ENCODE measurements at regions of chr7 and their contacts with region 1.

Region 1: DNA sequence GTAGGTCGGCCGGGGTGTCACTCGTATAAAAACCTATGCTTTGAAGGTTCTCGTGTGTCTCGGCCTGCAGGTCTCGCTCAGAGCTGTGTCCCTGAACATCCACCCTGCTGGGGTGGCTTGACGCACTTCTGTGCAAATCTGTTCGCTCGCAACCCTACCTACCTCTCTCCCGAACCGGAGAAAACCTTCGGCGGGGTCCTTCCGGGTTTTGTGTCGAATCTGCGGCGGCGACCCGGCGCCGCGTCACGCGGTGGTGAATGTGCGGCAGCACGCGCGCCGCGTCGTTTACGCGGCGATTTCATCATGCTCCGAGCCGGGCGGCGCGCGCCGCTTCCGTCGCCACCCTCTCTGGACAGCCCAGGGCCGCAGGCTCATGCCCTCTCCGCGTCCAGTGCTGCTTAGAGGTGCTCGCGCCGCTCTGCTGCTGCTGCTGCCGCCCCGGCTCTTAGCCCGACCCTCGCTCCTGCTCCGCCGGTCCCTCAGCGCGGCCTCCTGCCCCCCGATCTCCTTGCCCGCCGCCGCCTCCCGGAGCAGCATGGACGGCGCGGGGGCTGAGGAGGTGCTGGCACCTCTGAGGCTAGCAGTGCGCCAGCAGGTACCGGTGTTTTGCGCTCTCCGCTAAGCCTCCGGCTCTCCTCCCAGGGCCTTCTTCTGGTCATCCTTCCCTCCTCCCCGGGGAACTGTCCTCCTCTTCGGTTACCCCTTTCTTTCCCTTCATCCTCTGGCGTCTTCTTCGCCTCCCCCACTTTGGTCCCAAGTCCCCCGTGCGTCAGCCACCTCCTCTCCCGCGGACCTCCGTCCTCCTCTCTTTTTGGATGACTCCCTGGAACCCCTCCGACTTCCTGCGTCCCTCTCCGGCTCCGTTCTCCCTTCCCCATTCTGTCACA is at the start of gene GARS1:
- DNase-seq: peak; percentile 85
- H3K4me3 Mint-ChIP-seq: peak within 1 kb of the TSS; percentile 98
- H3K27ac Mint-ChIP-seq: peak within 1 kb of the TSS; percentile 98
- H3K4me1 Mint-ChIP-seq: peaks cover 44% of the 10 kb centered on the region
- H3K27me3 Mint-ChIP-seq: no peaks in the 10 kb centered on the region
- total RNA-seq, gene GARS1: 208 and 221 TPM in 2 replicates

Region 2: DNA sequence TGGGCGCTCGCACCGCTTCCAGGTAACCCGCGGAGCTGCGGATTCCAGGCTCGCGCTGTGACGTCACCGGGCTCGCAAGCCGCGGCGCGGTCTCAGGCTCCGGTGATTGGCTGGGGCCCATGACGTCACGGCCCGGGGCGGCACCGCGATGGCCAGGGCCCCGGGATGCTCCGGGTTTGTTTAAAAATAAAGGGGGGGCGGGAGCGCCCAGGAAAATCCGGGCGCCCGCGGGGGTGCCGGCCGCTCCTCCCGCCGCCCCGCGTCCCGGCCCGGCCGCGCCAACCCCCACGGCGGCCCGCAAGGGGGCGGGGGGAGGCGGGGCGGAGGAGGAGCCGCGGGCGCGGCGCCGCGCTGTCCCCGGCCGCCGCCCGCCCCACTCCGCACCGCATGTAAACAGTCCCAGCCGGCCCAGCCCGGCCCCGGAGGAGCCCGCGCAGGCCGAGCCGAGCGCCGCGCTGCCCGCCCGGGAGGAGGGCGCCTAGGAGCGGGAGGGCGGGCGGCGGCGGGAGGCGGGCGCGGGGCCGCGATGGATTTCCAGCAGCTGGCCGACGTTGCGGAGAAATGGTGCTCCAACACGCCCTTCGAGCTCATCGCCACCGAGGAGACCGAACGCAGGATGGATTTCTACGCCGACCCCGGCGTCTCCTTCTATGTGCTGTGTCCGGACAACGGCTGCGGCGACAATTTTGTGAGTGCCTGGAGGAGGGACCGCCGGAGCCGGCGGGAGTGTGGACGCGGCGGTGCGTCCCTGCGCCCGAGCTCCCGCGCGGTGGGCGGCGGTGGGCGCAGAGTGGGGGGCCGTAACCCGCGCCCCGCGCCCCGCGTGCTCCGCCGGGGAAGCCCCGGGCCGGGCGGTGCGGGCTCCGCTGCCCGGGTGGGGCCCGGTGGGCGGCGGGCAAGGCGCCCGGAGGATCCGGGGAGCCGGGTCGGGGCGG is 459.9 kb before region 1 on chr7 and contains the start of gene MTURN:
- intact Hi-C with region 1: loop called (anchors 10 kb)
- DNase-seq: peak; percentile 81
- H3K4me3 Mint-ChIP-seq: peak within 1 kb of the TSS; percentile 86
- H3K27ac Mint-ChIP-seq: peak within 1 kb of the TSS; percentile 80
- H3K4me1 Mint-ChIP-seq: peaks cover 4% of the 10 kb centered on the region
- H3K27me3 Mint-ChIP-seq: peaks cover 34% of the 10 kb centered on the region
- total RNA-seq, gene MTURN: 4.0 and 4.7 TPM in 2 replicates

Region 3: DNA sequence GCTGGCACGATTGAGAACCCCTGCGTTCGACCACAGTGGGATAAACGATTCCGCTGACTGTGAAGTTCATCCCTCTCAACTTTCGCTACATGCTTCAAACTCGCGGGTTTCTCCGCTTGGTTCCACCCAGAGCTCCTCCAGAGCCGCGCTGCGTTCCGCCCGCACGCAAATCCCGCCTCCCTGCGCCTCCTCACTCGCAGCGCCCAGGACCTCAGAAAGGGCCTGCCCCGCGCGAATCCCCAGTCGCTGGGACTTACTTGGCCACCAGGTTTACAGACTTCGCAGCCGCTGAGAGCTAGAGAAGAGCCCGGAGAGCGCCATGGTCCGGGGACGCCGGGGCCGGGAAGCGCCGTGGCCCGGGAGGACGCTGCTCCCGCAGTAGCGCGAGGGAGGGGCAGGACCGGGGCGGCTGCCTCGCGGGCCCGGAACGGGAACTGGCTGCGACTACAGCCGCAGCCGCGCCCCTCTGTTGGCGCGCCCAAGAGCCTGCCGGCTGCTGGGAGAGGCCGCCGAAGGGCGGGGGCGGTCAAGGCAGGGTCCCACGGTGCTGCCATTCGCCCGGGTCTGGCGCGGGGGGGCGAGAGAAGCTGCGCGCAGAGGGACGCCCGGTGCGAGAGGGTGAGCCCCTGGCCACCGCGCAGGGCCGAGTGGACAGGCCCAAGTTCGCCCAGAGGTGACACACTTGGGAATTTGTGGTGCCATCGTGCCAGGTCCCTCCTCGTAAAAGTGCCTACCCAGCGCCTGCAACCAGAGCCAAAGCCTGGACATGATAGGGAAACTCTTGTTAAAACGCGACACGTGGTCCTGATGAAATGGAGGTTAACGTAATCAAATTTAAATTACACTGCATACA is 116.2 kb before region 1 on chr7 and contains the start of gene NOD1:
- intact Hi-C with region 1: loop called (anchors 2 kb)
- DNase-seq: peak; percentile 70
- H3K4me3 Mint-ChIP-seq: peak within 1 kb of the TSS; percentile 91
- H3K27ac Mint-ChIP-seq: peak within 1 kb of the TSS; percentile 89
- H3K4me1 Mint-ChIP-seq: peaks cover 51% of the 10 kb centered on the region
- H3K27me3 Mint-ChIP-seq: no peaks in the 10 kb centered on the region
- total RNA-seq, gene NOD1: 14.8 and 15.8 TPM in 2 replicates

Region 4: DNA sequence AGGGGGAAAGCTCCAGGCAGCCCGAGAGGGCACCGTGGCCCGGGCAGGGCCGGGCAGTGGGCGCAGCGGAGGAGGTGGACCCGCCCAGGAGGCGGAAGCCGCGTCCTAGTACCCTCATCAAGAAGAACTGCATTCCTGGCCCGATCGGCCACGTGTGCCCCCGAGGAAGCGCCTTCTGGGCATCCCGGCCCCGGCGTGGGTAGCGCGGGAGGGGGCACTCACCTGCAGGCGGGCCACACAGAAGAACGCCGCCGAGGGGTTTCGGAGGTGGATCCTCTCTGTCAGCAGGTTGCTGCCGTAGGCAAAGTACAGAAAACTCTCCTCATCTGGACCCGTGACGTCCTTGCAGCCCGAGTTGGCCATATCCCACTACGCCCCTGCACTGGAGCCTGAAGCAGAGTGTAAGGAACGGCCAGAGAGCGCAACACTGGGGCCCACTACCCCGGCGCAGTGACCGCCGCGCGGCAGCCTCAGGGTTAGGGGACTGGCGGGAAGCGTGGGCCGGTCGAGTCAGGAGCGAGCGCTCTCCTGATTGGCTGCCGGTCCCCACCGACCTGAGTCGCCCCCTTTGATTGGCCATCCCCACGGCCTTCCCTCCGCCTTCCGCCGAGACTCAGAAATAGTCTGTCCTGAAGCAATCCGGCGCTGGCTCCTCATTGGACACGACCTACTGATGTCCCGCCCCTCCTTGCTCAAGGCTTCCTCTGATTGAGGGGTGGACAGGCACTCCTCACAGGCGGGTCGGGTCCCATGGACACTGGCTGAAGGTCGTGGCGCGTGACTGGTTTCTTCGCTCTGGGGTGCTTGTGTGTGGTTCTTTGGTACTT is 90.2 kb before region 1 on chr7 and contains the start of gene GGCT:
- intact Hi-C with region 1: loop called (anchors 10 kb)
- DNase-seq: peak; percentile 97
- H3K4me3 Mint-ChIP-seq: peak within 1 kb of the TSS; percentile 85
- H3K27ac Mint-ChIP-seq: peak within 1 kb of the TSS; percentile 88
- H3K4me1 Mint-ChIP-seq: peaks cover 50% of the 10 kb centered on the region
- H3K27me3 Mint-ChIP-seq: no peaks in the 10 kb centered on the region
- total RNA-seq, gene GGCT: 71.6 and 72.7 TPM in 2 replicates

Region 5: GRCh38 chr7:30612658-30613265 is 18.0 kb after region 1 on chr7:
- intact Hi-C with region 1: loop called (anchors 2 kb)
- DNase-seq: no peak
- H3K4me3 Mint-ChIP-seq: no peak overlapping the region
- H3K27ac Mint-ChIP-seq: peak overlapping the region; percentile 69
- H3K4me1 Mint-ChIP-seq: peaks cover 58% of the 10 kb centered on the region
- H3K27me3 Mint-ChIP-seq: no peaks in the 10 kb centered on the region

Region 6: DNA sequence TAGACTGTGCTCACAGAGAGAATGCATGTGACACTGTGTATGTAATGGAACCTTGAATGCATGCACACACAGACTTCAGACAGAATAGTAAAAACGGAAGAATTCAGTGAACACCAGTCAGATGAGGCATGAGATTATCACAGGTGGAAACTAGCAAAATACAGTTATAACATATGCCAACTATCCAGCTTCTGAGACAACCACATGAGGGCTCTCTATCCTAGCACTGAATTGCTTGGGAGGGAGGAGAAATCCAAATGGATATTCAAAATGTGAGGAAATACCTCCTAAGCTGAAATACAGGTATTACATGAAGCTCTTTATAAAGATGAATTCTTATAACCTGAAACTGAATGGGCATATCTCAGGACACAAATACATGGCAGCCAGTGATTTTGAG is 30.5 kb after region 1 on chr7:
- intact Hi-C with region 1: loop called (anchors 5 kb)
- DNase-seq: no peak
- H3K4me3 Mint-ChIP-seq: no peak overlapping the region
- H3K27ac Mint-ChIP-seq: peak overlapping the region; percentile 70
- H3K4me1 Mint-ChIP-seq: peaks cover 26% of the 10 kb centered on the region
- H3K27me3 Mint-ChIP-seq: no peaks in the 10 kb centered on the region